CD8-positive, alpha-beta memory T cell (primary cell): ENCODE measurements at regions of chr13 and their contacts with region 1.

Region 1: GRCh38 chr13:30395192-30396084 is 26.9 kb upstream of the UBE2L5 start:
- DNase-seq: peak; percentile 58 to 85 (median 62)
- H3K4me3 ChIP-seq: peak overlapping the region; percentile 89
- H3K4me3 Mint-ChIP-seq: peak overlapping the region; percentile 80 to 98 (median 86)
- H3K27ac ChIP-seq: peak overlapping the region; percentile 76
- H3K27ac Mint-ChIP-seq: peak overlapping the region; percentile 71 to 99 (median 93)
- H3K4me1 ChIP-seq: peaks cover 25% of the 10 kb centered on the region
- H3K4me1 Mint-ChIP-seq: peaks cover 15 to 41% (median 40%) of the 10 kb centered on the region in 3 donors
- H3K27me3 ChIP-seq: no peaks in the 10 kb centered on the region
- H3K27me3 Mint-ChIP-seq: no peaks in the 10 kb centered on the region

Region 2: DNA sequence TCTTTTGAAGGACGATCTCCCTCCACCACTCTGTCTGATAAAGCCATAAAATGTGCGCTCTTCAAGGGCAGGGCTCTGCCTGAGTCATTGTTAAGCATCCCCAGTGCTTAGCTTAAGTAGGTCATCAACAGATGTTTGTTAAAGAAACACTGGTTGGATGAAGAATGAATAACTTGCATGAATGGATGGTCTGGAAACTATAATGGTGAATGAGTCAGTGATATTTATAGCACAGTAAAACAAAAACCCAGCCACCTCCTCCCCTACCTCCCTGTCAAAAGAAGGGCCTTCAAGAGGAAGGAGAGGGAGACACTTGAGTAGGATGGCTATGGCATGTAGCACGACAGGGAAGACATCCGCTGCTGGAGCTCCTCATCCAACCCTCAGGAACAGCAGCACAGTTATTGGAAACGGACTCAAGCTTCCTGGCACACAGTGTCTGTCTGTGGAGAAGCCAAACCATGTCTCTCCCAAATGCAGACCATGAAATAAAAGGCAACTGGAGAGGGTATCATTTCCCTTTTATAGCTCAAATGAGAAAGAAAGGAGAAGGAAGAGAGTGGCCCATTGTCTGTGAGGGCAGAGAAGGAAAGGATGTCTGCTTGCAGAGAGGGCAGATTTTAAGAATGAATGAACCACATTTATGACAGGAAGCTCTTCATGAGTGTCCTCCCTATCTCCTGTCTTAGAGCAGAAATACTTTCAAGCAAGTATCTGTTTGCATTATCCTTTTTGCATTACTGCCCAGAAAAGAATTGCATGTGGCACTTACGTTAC is 361.6 kb before region 1 on chr13:
- CTCF ChIA-PET with region 1: no interaction called
- POLR2A ChIA-PET with region 1: no interaction called
- DNase-seq: no peak
- H3K4me3 ChIP-seq: no peak overlapping the region
- H3K4me3 Mint-ChIP-seq: no peak overlapping the region
- H3K27ac ChIP-seq: no peak overlapping the region
- H3K27ac Mint-ChIP-seq: no peak overlapping the region
- H3K4me1 ChIP-seq: no peaks in the 10 kb centered on the region
- H3K4me1 Mint-ChIP-seq: no peaks in the 10 kb centered on the region
- H3K27me3 ChIP-seq: no peaks in the 10 kb centered on the region
- H3K27me3 Mint-ChIP-seq: peaks cover 4 to 12% of the 10 kb centered on the region in 2 donors

Region 3: GRCh38 chr13:30382836-30383525 is 12.5 kb before region 1 on chr13:
- CTCF ChIA-PET with region 1: interaction called, 18 read pairs
- POLR2A ChIA-PET with region 1: interaction called, 6 read pairs
- DNase-seq: no peak
- H3K4me3 ChIP-seq: no peak overlapping the region
- H3K4me3 Mint-ChIP-seq: no peak overlapping the region
- H3K27ac ChIP-seq: no peak overlapping the region
- H3K27ac Mint-ChIP-seq: peak overlapping the region in 5 of 8 donors; percentile 22 to 74 (median 54)
- H3K4me1 ChIP-seq: peaks cover 39% of the 10 kb centered on the region
- H3K4me1 Mint-ChIP-seq: peaks cover 26 to 46% (median 41%) of the 10 kb centered on the region in 3 donors
- H3K27me3 ChIP-seq: no peaks in the 10 kb centered on the region
- H3K27me3 Mint-ChIP-seq: peaks cover 0 to 1% of the 10 kb centered on the region in 2 donors

Region 4: GRCh38 chr13:30408319-30409101 is 13.1 kb after region 1 on chr13:
- CTCF ChIA-PET with region 1: interaction called, 61 read pairs
- POLR2A ChIA-PET with region 1: interaction called, 9 read pairs
- DNase-seq: peak; percentile 81 to 92 (median 85)
- H3K4me3 ChIP-seq: no peak overlapping the region
- H3K4me3 Mint-ChIP-seq: peak overlapping the region; percentile 50 to 84 (median 72)
- H3K27ac ChIP-seq: no peak overlapping the region
- H3K27ac Mint-ChIP-seq: peak overlapping the region; percentile 63 to 93 (median 82)
- H3K4me1 ChIP-seq: peaks cover 10% of the 10 kb centered on the region
- H3K4me1 Mint-ChIP-seq: peaks cover 31 to 43% (median 36%) of the 10 kb centered on the region in 3 donors
- H3K27me3 ChIP-seq: no peaks in the 10 kb centered on the region
- H3K27me3 Mint-ChIP-seq: no peaks in the 10 kb centered on the region

Region 5: DNA sequence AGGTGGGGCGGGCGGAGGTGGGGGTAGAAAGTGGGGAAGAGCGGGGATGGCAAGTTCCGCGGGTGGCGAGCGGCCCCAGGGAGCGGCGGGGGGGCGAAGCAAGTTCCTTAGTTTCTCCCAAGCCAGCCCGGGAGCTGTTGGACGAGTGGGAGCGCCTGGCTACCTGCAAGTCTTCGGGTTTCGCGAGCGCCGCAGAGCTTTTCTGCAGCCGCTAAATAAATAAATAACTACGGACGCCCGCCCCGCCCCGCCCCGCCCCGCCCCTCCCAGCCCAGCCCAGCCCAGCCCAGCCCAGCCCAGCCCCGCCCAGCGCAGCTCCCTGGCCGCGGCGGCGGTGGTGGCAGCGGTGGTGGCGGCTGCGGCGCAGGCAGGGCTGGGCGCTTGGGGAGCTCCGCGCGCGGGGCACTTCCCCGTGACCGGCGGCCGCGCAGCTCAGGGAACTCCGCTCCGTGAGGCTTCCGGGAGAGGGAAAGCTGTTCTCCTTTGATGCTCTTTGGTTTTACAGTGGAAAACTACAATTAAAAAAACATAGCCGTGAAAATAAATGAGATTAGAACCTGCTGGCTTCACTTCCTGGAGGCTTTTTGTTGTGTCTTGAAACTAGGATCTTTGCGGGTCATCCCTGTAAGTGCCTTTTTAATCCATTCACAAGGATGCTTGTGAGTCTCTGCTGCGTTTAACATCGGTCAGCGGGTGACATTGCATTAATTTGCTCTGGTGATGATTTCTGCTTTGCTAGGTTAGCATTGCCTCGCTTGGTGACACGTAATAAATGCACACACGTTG is 26.8 kb after region 1 on chr13 and contains the start of gene UBE2L5:
- CTCF ChIA-PET with region 1: no interaction called
- POLR2A ChIA-PET with region 1: interaction called, 15 read pairs
- DNase-seq: peak; percentile 62 to 81 (median 71)
- H3K4me3 ChIP-seq: peak within 1 kb of the TSS; percentile 48
- H3K4me3 Mint-ChIP-seq: peak within 1 kb of the TSS; percentile 80 to 98 (median 87)
- H3K27ac ChIP-seq: no peak within 1 kb of the TSS
- H3K27ac Mint-ChIP-seq: peak within 1 kb of the TSS; percentile 25 to 93 (median 82)
- H3K4me1 ChIP-seq: peaks cover 6% of the 10 kb centered on the region
- H3K4me1 Mint-ChIP-seq: peaks cover 11 to 23% (median 20%) of the 10 kb centered on the region in 3 donors
- H3K27me3 ChIP-seq: no peaks in the 10 kb centered on the region
- H3K27me3 Mint-ChIP-seq: peaks cover 0 to 2% of the 10 kb centered on the region in 2 donors
- total RNA-seq, gene UBE2L5: not detected

Region 6: GRCh38 chr13:30443957-30444404 is 48.5 kb after region 1 on chr13:
- CTCF ChIA-PET with region 1: no interaction called
- POLR2A ChIA-PET with region 1: no interaction called
- DNase-seq: no peak
- H3K4me3 ChIP-seq: no peak overlapping the region
- H3K4me3 Mint-ChIP-seq: no peak overlapping the region
- H3K27ac ChIP-seq: no peak overlapping the region
- H3K27ac Mint-ChIP-seq: no peak overlapping the region
- H3K4me1 ChIP-seq: no peaks in the 10 kb centered on the region
- H3K4me1 Mint-ChIP-seq: peaks cover 3 to 5% (median 5%) of the 10 kb centered on the region in 3 donors
- H3K27me3 ChIP-seq: no peaks in the 10 kb centered on the region
- H3K27me3 Mint-ChIP-seq: peaks cover 4 to 6% of the 10 kb centered on the region in 2 donors